ENCODE measurements at regions of chr6 and their contacts with region 1.

Region 1: GRCh38 chr6:157045831-157046454 is 268.8 kb downstream of the ARID1B start:
- H3K4me3 Mint-ChIP-seq: no peak overlapping the region
- H3K27ac Mint-ChIP-seq: no peak overlapping the region
- H3K4me1 Mint-ChIP-seq: peaks cover 26% of the 10 kb centered on the region
- H3K27me3 Mint-ChIP-seq: no peaks in the 10 kb centered on the region

Region 2: DNA sequence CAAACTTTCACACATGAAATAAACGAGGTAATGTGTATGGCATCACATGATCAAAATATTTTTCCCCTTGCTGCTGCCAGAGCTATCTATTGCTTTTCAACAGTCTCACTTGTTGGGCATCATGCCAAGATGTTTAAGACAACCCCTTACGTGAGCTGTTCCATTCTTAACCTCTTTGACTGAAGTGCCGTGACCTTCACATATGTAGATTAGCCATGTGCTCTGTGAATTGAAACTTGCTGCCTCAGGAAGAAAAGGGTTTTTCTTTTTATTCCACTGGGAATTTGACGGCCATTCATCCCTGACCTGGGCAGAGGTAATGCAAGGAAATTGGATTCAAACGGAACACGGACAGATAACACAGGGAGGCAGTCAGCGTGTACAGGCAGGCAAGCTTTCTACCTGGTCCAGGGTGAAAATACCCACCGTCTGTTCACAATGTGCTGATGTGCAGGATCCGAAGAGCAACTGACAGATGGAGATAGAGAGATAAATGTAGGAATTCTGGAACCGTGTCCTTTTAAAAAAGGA is 254.6 kb before region 1 on chr6:
- intact Hi-C with region 1: no loop called
- H3K4me3 Mint-ChIP-seq: no peak overlapping the region
- H3K27ac Mint-ChIP-seq: no peak overlapping the region
- H3K4me1 Mint-ChIP-seq: peaks cover 55% of the 10 kb centered on the region
- H3K27me3 Mint-ChIP-seq: no peaks in the 10 kb centered on the region

Region 3: GRCh38 chr6:157013649-157014304 is 32.2 kb before region 1 on chr6:
- intact Hi-C with region 1: no loop called
- H3K4me3 Mint-ChIP-seq: no peak overlapping the region
- H3K27ac Mint-ChIP-seq: no peak overlapping the region
- H3K4me1 Mint-ChIP-seq: peaks cover 17% of the 10 kb centered on the region
- H3K27me3 Mint-ChIP-seq: no peaks in the 10 kb centered on the region

Region 4: GRCh38 chr6:157099912-157100593 is 54.1 kb after region 1 on chr6:
- intact Hi-C with region 1: loop called (anchors 10 kb)
- H3K4me3 Mint-ChIP-seq: no peak overlapping the region
- H3K27ac Mint-ChIP-seq: peak overlapping the region; percentile 68
- H3K4me1 Mint-ChIP-seq: peaks cover 77% of the 10 kb centered on the region
- H3K27me3 Mint-ChIP-seq: no peaks in the 10 kb centered on the region